Activated CD8-positive, alpha-beta T cell treated with anti-CD3 and anti-CD28 coated beads, Interleukin-2, amount 10 ng/mL, durations not matched to agents 7 days and 5 days (primary cell): ENCODE measurements at regions of chr19 and their contacts with region 1.

Region 1: GRCh38 chr19:56066152-56067023 is 54.7 kb downstream of the ZNF787 start:
- DNase-seq: peak; percentile 74
- ATAC-seq: peak; percentile 86
- H3K4me3 Mint-ChIP-seq: peak overlapping the region; percentile 64
- H3K27ac Mint-ChIP-seq: peak overlapping the region; percentile 47
- H3K4me1 Mint-ChIP-seq: peaks cover 12% of the 10 kb centered on the region
- H3K27me3 Mint-ChIP-seq: peaks cover 11% of the 10 kb centered on the region

Region 2: DNA sequence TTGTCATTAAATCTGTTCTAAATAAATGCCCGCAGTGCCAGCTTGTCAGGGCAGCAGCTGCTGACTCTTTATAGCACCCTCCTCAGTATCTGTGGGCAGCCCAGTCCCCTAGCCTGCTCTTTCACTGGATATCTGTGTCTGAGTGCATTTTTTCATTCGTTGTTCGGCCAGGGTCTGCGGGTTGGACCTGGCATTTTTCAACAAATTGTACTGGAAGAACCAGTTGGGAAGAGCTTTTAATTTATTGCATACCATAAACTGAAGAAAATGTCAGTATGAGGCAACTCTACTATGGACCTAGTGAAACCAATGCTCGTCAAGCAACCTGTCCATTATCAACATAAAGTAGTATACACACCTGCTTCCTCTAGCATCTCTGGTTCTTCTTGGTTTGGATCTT is 142.8 kb before region 1 on chr19:
- CTCF ChIA-PET with region 1: no interaction called
- POLR2A ChIA-PET with region 1: no interaction called
- DNase-seq: no peak
- ATAC-seq: no peak
- H3K4me3 Mint-ChIP-seq: no peak overlapping the region
- H3K27ac Mint-ChIP-seq: no peak overlapping the region
- H3K4me1 Mint-ChIP-seq: no peaks in the 10 kb centered on the region
- H3K27me3 Mint-ChIP-seq: no peaks in the 10 kb centered on the region

Region 3: DNA sequence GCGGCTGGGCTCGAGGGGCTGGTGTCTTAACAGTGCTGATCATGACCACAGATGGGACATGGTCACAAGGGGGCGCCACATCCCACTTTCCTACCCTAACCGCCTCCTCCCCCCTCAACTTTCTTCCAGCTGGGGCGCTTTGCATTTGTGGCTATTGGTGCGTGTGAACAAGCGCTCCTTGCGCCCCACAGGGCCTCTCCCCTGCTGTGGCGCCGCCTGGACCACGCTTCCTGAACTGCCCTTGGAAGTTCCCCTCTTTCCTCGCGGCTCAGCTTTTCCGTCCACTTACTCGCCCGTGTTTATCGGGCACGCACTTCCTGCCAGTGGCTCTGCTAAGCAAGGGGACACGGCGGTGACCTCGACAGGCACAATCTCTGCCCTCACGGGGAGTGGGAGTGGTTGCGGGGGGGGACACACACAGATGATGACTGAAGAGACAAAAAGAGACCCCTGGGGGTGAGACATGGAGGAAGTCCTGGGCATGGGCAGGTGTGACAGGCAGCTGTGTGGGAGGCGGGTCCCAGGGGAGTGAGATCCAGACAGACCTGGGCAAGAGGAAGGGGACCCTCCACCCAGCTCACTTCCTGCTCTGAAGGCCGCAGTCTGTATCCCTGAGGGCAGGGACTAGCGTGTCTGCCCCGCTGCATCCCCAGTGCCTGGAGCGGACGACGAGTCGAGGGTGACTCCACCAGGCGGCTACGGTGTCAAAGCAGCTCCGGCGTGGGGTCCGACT is 14.4 kb after region 1 on chr19:
- CTCF ChIA-PET with region 1: interaction called, 25 read pairs
- POLR2A ChIA-PET with region 1: no interaction called
- DNase-seq: peak; percentile 80
- ATAC-seq: peak; percentile 71
- H3K4me3 Mint-ChIP-seq: peak overlapping the region; percentile 67
- H3K27ac Mint-ChIP-seq: no peak overlapping the region
- H3K4me1 Mint-ChIP-seq: peaks cover 10% of the 10 kb centered on the region
- H3K27me3 Mint-ChIP-seq: peaks cover 4% of the 10 kb centered on the region

Region 4: DNA sequence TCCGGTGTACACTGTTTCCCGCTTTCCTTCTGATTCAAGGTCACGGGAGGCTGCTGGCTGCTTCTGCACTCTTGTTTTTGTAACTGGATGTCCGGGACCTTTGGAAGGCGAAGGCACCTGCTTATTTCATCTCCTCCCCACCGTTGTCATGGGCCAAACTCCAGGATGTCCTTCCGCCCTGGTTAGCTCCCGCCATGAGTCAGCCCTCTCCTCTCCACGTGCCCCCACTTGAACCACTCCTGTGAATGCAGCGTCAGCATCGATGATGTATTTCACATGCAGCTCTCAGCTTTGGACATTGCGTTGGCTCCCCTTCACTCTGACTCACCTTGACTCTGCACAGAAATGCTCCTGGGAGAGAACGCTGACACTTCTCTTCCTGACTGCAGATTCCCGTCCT is 103.9 kb after region 1 on chr19:
- CTCF ChIA-PET with region 1: interaction called, 10 read pairs
- POLR2A ChIA-PET with region 1: no interaction called
- DNase-seq: no peak
- ATAC-seq: no peak
- H3K4me3 Mint-ChIP-seq: no peak overlapping the region
- H3K27ac Mint-ChIP-seq: no peak overlapping the region
- H3K4me1 Mint-ChIP-seq: peaks cover 4% of the 10 kb centered on the region
- H3K27me3 Mint-ChIP-seq: no peaks in the 10 kb centered on the region

Region 5: GRCh38 chr19:56350416-56351045 is 284.1 kb after region 1 on chr19:
- CTCF ChIA-PET with region 1: interaction called, 13 read pairs
- POLR2A ChIA-PET with region 1: no interaction called
- DNase-seq: peak; percentile 70
- ATAC-seq: no peak
- H3K4me3 Mint-ChIP-seq: no peak overlapping the region
- H3K27ac Mint-ChIP-seq: no peak overlapping the region
- H3K4me1 Mint-ChIP-seq: no peaks in the 10 kb centered on the region
- H3K27me3 Mint-ChIP-seq: no peaks in the 10 kb centered on the region